ENCODE measurements at regions of chr12 and their contacts with region 1.

Region 1: DNA sequence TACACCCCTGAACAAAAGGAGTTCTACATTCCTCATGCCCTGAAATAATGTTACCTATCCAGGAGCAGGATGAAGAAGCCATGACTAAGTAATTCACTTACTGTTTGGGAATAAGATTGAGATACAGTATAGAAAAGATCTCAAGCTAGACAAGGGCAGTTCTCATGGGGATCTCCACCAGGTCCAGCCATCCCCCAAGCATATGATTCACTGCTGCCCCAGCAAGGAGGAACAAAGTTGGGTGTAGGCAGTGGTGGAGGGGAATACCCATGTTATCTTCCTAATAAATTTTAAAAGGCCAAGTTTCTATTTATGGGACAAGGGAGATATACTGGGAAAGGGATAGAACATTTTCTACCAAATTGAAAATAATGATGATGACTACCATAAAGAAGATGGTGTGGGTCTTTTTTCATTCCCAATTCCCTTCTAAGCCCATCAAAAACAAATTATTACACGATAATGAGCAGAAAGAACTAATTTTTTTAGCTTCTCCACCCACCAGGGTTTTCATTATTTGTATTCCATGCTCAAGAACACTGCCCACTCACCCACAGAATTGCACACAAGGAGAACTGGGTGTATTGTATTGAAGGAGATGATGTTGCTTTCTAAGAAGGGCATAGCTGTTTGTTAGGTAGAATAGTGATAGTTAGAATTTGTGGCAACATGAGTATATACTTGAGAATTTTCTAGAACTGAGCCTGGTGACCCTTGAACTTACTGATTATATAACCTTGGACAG is 204.6 kb downstream of the BTG1 start:
- DNase-seq: no peak
- ATAC-seq: no peak
- H3K4me3 ChIP-seq: no peak overlapping the region
- H3K4me3 Mint-ChIP-seq: no peak overlapping the region
- H3K27ac ChIP-seq: no peak overlapping the region
- H3K27ac Mint-ChIP-seq: no peak overlapping the region
- H3K4me1 ChIP-seq: no peaks in the 10 kb centered on the region
- H3K4me1 Mint-ChIP-seq: peaks cover 10% of the 10 kb centered on the region
- H3K27me3 ChIP-seq: no peaks in the 10 kb centered on the region
- H3K27me3 Mint-ChIP-seq: no peaks in the 10 kb centered on the region
- CTCF ChIP-seq: no peak

Region 2: DNA sequence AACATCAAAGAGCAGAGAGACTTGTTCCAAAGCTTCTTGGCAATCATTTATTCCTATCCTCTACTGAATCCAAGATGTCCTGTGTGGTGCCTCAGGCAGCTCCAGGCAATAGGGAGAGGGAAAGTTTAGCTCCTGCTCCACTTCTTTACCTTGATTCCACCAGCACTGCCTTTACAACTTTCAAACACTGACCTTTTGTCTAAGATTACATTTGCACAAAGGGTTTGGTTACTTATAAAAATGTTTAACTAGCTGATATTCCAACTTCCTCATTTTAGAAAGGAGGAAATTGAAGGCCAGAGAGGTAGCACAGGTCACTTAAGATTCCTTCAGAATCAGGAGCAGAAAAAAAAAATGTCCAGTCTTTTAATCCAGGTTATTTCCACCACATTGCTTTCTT is 11.9 kb after region 1 on chr12:
- CTCF ChIA-PET with region 1: no interaction called
- POLR2A ChIA-PET with region 1: interaction called, 3 read pairs
- intact Hi-C with region 1: loop called in 1 of 2 experiments (anchors 1 kb)
- DNase-seq: no peak
- ATAC-seq: no peak
- H3K4me3 ChIP-seq: no peak overlapping the region
- H3K4me3 Mint-ChIP-seq: no peak overlapping the region
- H3K27ac ChIP-seq: no peak overlapping the region
- H3K27ac Mint-ChIP-seq: no peak overlapping the region
- H3K4me1 ChIP-seq: peaks cover 8% of the 10 kb centered on the region
- H3K4me1 Mint-ChIP-seq: peaks cover 15% of the 10 kb centered on the region
- H3K27me3 ChIP-seq: no peaks in the 10 kb centered on the region
- H3K27me3 Mint-ChIP-seq: no peaks in the 10 kb centered on the region
- CTCF ChIP-seq: no peak

Region 3: GRCh38 chr12:91958816-91959215 is 17.8 kb after region 1 on chr12:
- CTCF ChIA-PET with region 1: no interaction called
- POLR2A ChIA-PET with region 1: no interaction called
- intact Hi-C with region 1: loop called in 1 of 2 experiments (anchors 2 kb)
- DNase-seq: no peak
- ATAC-seq: no peak
- H3K4me3 ChIP-seq: no peak overlapping the region
- H3K4me3 Mint-ChIP-seq: no peak overlapping the region
- H3K27ac ChIP-seq: no peak overlapping the region
- H3K27ac Mint-ChIP-seq: no peak overlapping the region
- H3K4me1 ChIP-seq: no peaks in the 10 kb centered on the region
- H3K4me1 Mint-ChIP-seq: peaks cover 4% of the 10 kb centered on the region
- H3K27me3 ChIP-seq: no peaks in the 10 kb centered on the region
- H3K27me3 Mint-ChIP-seq: no peaks in the 10 kb centered on the region
- CTCF ChIP-seq: no peak

Measured in CD8-positive, alpha-beta T cell (primary cell).